B cell (primary cell): ENCODE measurements at regions of chr12 and their contacts with region 1.

Region 1: GRCh38 chr12:122793685-122794106 is 19.3 kb downstream of the CCDC62 start:
- DNase-seq: peak; percentile 76
- ATAC-seq: peak; percentile 86
- H3K4me3 ChIP-seq: no peak overlapping the region
- H3K4me3 Mint-ChIP-seq: no peak overlapping the region
- H3K27ac ChIP-seq: no peak overlapping the region
- H3K27ac Mint-ChIP-seq: no peak overlapping the region
- H3K4me1 ChIP-seq: peaks cover 3 to 6% of the 10 kb centered on the region in 2 donors
- H3K4me1 Mint-ChIP-seq: peaks cover 4% of the 10 kb centered on the region
- H3K27me3 ChIP-seq: no peaks in the 10 kb centered on the region
- H3K27me3 Mint-ChIP-seq: no peaks in the 10 kb centered on the region
- CTCF ChIP-seq: peak; percentile 86

Region 2: DNA sequence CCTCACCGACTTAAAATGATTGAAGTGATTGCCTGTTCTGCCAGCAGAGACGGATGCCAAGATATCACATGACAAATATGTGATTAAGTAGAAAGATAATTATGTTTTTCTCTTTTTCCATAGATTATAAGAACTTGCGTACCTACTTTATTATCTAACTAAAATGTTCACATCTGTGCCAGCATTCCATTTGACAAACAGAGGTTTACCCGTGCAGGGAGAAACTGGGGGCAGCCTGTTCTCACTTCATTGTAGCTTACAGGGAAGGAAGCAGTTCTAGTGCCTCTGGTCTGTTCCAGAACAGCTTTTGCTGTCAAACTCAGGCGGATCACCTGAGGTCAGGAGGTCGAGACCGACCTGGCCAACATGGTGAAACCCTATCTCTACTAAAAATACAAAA is 10.2 kb after region 1 on chr12:
- CTCF ChIA-PET with region 1: interaction called, 17 read pairs
- POLR2A ChIA-PET with region 1: no interaction called
- intact Hi-C with region 1: no loop called
- DNase-seq: no peak
- ATAC-seq: no peak
- H3K4me3 ChIP-seq: no peak overlapping the region
- H3K4me3 Mint-ChIP-seq: no peak overlapping the region
- H3K27ac ChIP-seq: no peak overlapping the region
- H3K27ac Mint-ChIP-seq: no peak overlapping the region
- H3K4me1 ChIP-seq: peaks cover 7% of the 10 kb centered on the region in 2 donors
- H3K4me1 Mint-ChIP-seq: peaks cover 8% of the 10 kb centered on the region
- H3K27me3 ChIP-seq: no peaks in the 10 kb centered on the region
- H3K27me3 Mint-ChIP-seq: no peaks in the 10 kb centered on the region
- CTCF ChIP-seq: no peak

Region 3: GRCh38 chr12:122834104-122834920 is 40.6 kb after region 1 on chr12:
- CTCF ChIA-PET with region 1: interaction called, 89 read pairs
- POLR2A ChIA-PET with region 1: interaction called, 10 read pairs
- intact Hi-C with region 1: loop called (anchors 1 kb)
- DNase-seq: peak; percentile 65
- ATAC-seq: no peak
- H3K4me3 ChIP-seq: peak overlapping the region; percentile 24 to 99 (median 45)
- H3K4me3 Mint-ChIP-seq: peak overlapping the region; percentile 98
- H3K27ac ChIP-seq: peak overlapping the region; percentile 25 to 38
- H3K27ac Mint-ChIP-seq: peak overlapping the region; percentile 88
- H3K4me1 ChIP-seq: peaks cover 32 to 35% of the 10 kb centered on the region in 2 donors
- H3K4me1 Mint-ChIP-seq: peaks cover 40% of the 10 kb centered on the region
- H3K27me3 ChIP-seq: no peaks in the 10 kb centered on the region
- H3K27me3 Mint-ChIP-seq: no peaks in the 10 kb centered on the region
- CTCF ChIP-seq: peak; percentile 34

Region 4: GRCh38 chr12:122852336-122853275 is 58.9 kb after region 1 on chr12:
- CTCF ChIA-PET with region 1: interaction called, 24 read pairs
- POLR2A ChIA-PET with region 1: no interaction called
- intact Hi-C with region 1: no loop called
- DNase-seq: no peak
- ATAC-seq: no peak
- H3K4me3 ChIP-seq: no peak overlapping the region
- H3K4me3 Mint-ChIP-seq: no peak overlapping the region
- H3K27ac ChIP-seq: no peak overlapping the region
- H3K27ac Mint-ChIP-seq: no peak overlapping the region
- H3K4me1 ChIP-seq: no peaks in the 10 kb centered on the region
- H3K4me1 Mint-ChIP-seq: no peaks in the 10 kb centered on the region
- H3K27me3 ChIP-seq: no peaks in the 10 kb centered on the region
- H3K27me3 Mint-ChIP-seq: no peaks in the 10 kb centered on the region
- CTCF ChIP-seq: no peak

Region 5: DNA sequence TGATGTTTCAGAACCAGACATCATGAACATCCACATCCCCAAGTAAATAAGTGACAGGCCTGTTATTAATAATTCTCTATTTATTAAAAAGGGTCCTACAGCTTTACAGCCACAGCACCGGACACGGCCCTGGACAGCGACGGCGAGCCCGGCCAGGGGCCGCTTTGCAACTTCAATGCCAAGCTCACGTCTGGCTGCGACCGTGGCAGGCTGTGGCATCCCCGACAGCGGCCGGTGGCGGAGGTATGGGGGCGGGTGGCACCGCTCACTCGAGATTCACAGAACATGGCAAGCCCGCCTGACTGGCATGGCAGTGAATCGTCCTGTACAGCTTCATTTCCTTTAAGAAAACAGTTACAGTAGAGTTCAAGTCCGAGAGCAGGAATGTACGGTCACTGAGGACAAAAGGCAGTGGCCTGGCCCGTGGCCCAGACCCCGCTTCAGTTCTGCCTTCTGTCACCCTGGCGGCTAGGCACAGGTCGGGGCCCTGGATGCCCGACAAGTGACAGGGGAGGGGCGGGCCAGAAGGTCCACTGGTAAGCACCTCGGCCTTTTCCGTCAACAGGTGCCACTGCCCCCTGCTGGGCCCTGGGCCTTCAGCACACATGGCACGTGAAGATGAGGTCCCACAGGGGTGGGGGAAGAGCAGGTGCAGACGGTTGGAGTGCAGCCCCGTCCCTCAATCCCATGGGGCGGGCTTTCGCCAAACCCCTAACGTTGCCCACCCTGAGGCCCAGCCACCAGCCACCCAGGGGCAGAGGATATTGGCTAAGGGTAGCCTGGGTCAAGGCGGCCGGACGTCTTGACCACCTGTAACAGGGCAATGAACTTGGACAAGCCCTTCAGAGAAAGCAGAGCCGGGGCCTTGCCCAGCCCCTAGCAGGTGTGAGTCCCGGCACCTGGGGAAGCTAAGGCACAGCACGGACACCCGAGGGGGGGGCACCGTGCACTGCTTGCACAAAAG is 71.9 kb after region 1 on chr12:
- CTCF ChIA-PET with region 1: interaction called, 101 read pairs
- POLR2A ChIA-PET with region 1: interaction called, 9 read pairs
- intact Hi-C with region 1: loop called (anchors 1 kb)
- DNase-seq: peak; percentile 66
- ATAC-seq: peak; percentile 40
- H3K4me3 ChIP-seq: no peak overlapping the region
- H3K4me3 Mint-ChIP-seq: no peak overlapping the region
- H3K27ac ChIP-seq: no peak overlapping the region
- H3K27ac Mint-ChIP-seq: peak overlapping the region; percentile 83
- H3K4me1 ChIP-seq: peaks cover 54 to 73% of the 10 kb centered on the region in 2 donors
- H3K4me1 Mint-ChIP-seq: peaks cover 79% of the 10 kb centered on the region
- H3K27me3 ChIP-seq: no peaks in the 10 kb centered on the region
- H3K27me3 Mint-ChIP-seq: no peaks in the 10 kb centered on the region
- CTCF ChIP-seq: peak; percentile 53

Region 6: DNA sequence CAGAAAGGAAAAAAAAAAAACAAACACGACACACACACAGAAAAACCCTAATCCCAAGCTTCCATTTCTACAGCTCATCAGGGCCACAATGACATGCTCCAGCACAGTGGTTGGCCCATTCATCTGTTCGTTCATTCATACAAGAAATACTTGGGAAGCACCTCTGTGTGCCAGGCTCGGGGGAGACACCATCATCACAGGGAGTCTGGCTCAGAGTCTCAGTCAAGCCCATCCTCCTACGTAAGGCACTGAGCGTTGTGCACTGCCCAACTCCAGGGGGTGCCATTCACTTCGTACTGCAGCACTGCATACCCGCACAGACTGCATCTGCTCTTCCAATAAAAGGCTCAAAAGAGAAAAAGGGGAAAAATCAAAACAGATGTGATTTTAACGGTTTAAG is 87.0 kb after region 1 on chr12:
- CTCF ChIA-PET with region 1: interaction called, 20 read pairs
- POLR2A ChIA-PET with region 1: no interaction called
- intact Hi-C with region 1: no loop called
- DNase-seq: peak; percentile 53
- ATAC-seq: peak; percentile 68
- H3K4me3 ChIP-seq: no peak overlapping the region
- H3K4me3 Mint-ChIP-seq: peak overlapping the region; percentile 45
- H3K27ac ChIP-seq: no peak overlapping the region
- H3K27ac Mint-ChIP-seq: peak overlapping the region; percentile 32
- H3K4me1 ChIP-seq: peaks cover 87 to 95% of the 10 kb centered on the region in 2 donors
- H3K4me1 Mint-ChIP-seq: peaks cover 88% of the 10 kb centered on the region
- H3K27me3 ChIP-seq: no peaks in the 10 kb centered on the region
- H3K27me3 Mint-ChIP-seq: no peaks in the 10 kb centered on the region
- CTCF ChIP-seq: peak; percentile 51

Region 7: GRCh38 chr12:122951979-122952892 is 158.5 kb after region 1 on chr12:
- CTCF ChIA-PET with region 1: interaction called, 93 read pairs
- POLR2A ChIA-PET with region 1: interaction called, 3 read pairs
- intact Hi-C with region 1: loop called (anchors 1 kb)
- DNase-seq: peak; percentile 84
- ATAC-seq: peak; percentile 99
- H3K4me3 ChIP-seq: no peak overlapping the region
- H3K4me3 Mint-ChIP-seq: no peak overlapping the region
- H3K27ac ChIP-seq: no peak overlapping the region
- H3K27ac Mint-ChIP-seq: peak overlapping the region; percentile 37
- H3K4me1 ChIP-seq: peaks cover 10 to 17% of the 10 kb centered on the region in 2 donors
- H3K4me1 Mint-ChIP-seq: peaks cover 21% of the 10 kb centered on the region
- H3K27me3 ChIP-seq: no peaks in the 10 kb centered on the region
- H3K27me3 Mint-ChIP-seq: no peaks in the 10 kb centered on the region
- CTCF ChIP-seq: peak; percentile 91